PC-9 (cell line): ENCODE measurements at regions of chr12 and their contacts with region 1.

Region 1: GRCh38 chr12:34126239-34126641 is 103.9 kb downstream of the ALG10 start:
- DNase-seq: no peak
- H3K4me3 ChIP-seq: peak overlapping the region; percentile 29; the same call in 1 of the 2 replicates
- H3K27ac ChIP-seq: no peak overlapping the region
- H3K4me1 ChIP-seq: no peaks in the 10 kb centered on the region
- H3K27me3 ChIP-seq: no peaks in the 10 kb centered on the region
- CTCF ChIP-seq: no peak

Region 2: GRCh38 chr12:34218165-34219045 is 92.2 kb after region 1 on chr12:
- CTCF ChIA-PET with region 1: no interaction called
- POLR2A ChIA-PET with region 1: no interaction called
- intact Hi-C with region 1: loop called (anchors 1 kb)
- DNase-seq: peak; percentile 64 to 73
- H3K4me3 ChIP-seq: peak overlapping the region; percentile 63; the same call in 1 of the 2 replicates
- H3K27ac ChIP-seq: no peak overlapping the region
- H3K4me1 ChIP-seq: no peaks in the 10 kb centered on the region
- H3K27me3 ChIP-seq: no peaks in the 10 kb centered on the region
- CTCF ChIP-seq: peak; percentile 91

Region 3: GRCh38 chr12:34625116-34625515 is 498.9 kb after region 1 on chr12:
- CTCF ChIA-PET with region 1: no interaction called
- POLR2A ChIA-PET with region 1: no interaction called
- intact Hi-C with region 1: loop called (anchors 1 kb)
- DNase-seq: peak in 1 of 2 experiments; percentile 35
- H3K4me3 ChIP-seq: no peak overlapping the region
- H3K27ac ChIP-seq: no peak overlapping the region
- H3K4me1 ChIP-seq: no peaks in the 10 kb centered on the region
- H3K27me3 ChIP-seq: no peaks in the 10 kb centered on the region
- CTCF ChIP-seq: peak; percentile 79